ENCODE measurements at regions of chr15 and their contacts with region 1.

Region 1: GRCh38 chr15:40906091-40906990 is 12.1 kb downstream of the VPS18 start:
- DNase-seq: peak; percentile 88 to 90
- H3K4me3 ChIP-seq: peak overlapping the region; percentile 21 to 38
- H3K27ac ChIP-seq: peak overlapping the region; percentile 77 to 79
- H3K4me1 ChIP-seq: peaks cover 0 to 5% of the 10 kb centered on the region in 2 donors
- H3K27me3 ChIP-seq: no peaks in the 10 kb centered on the region
- CTCF ChIP-seq: peak; percentile 72 to 88 (median 81)
- POLR2A ChIP-seq: peak in 1 of 2 donors; percentile 43

Region 2: DNA sequence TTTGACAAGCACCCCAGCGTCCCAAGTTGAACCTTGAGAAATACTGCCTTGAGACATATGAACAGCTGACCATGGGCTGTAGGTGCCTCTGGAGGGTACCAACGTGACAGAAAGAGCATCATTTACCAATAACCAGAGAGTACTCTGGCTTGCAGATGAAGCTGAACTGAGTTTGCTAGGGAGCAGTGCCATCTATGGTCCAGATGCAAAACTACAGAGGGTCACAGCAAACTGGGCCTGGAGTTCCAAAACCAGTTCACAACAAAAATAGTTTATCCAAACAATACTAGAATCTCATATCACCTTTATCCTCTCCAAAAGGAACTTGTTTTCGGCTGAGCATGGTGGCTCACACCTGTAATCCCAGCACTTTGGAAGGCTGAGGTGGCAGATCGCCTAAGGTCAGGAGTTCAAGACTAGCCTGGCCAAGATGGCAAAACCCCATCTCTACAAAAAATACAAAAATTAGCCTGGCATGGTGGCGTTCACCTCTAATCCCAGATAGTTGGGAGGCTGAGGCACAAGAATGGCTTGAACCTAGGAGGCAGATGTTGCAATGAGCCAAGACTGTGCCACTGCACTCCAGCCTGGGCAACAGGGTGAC is 116.2 kb after region 1 on chr15:
- intact Hi-C with region 1: loop called (anchors 10 kb)
- DNase-seq: peak in 1 of 2 donors; percentile 27
- H3K4me3 ChIP-seq: no peak overlapping the region
- H3K27ac ChIP-seq: no peak overlapping the region
- H3K4me1 ChIP-seq: no peaks in the 10 kb centered on the region
- H3K27me3 ChIP-seq: no peaks in the 10 kb centered on the region
- CTCF ChIP-seq: peak; percentile 50 to 67 (median 57)
- POLR2A ChIP-seq: no peak

Region 3: GRCh38 chr15:41180206-41180789 is 274.0 kb after region 1 on chr15:
- intact Hi-C with region 1: loop called (anchors 5 kb)
- DNase-seq: no peak
- H3K4me3 ChIP-seq: no peak overlapping the region
- H3K27ac ChIP-seq: no peak overlapping the region
- H3K4me1 ChIP-seq: no peaks in the 10 kb centered on the region
- H3K27me3 ChIP-seq: no peaks in the 10 kb centered on the region
- CTCF ChIP-seq: no peak
- POLR2A ChIP-seq: no peak